Brain microvascular endothelial cell (primary cell): ENCODE measurements at regions of chr12 and their contacts with region 1.

Region 1: DNA sequence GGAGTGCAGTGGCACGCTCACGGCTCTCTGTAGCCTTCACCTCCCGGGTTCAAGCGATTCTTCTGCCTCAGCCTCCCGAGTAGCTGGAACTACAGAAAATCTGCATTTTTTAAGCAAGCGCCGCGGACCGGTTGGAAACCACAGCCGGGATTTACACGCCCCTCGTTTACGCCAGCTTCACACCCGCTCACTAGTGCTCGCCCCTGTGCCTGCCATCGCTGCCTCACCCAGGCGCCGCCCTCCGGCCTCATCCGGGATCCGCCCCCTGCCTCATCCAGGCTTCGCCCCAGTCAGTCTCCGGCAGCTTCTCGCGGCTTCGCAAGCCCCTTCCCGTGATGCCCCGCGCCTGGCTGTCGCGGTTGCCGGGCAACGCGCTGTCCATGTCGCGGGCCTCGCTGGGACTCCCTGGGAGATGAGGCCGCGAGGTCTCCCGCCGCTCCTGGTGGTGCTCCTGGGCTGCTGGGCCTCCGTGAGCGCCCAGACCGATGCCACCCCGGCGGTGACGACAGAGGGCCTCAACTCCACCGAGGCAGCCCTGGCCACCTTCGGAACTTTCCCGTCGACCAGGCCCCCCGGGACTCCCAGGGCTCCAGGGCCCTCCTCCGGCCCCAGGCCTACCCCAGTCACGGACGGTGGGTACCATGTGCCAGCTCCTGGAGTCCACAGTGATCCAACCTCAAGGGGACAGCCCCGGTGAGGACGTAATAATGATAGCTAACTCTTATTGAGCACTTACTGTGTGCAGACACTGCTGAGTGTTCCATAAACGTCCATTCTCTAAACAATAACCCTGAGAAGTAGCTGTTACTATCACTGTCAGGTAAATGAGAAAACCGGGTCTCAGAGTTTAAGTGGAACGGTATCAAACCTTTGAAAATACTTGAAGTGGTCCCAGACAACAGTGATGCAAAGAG is at the start of gene TCTN1:
- DNase-seq: peak; percentile 93
- H3K4me3 ChIP-seq: peak within 1 kb of the TSS; percentile 75
- H3K27ac ChIP-seq: peak within 1 kb of the TSS; percentile 86
- H3K27me3 ChIP-seq: no peaks in the 10 kb centered on the region
- CTCF ChIP-seq: no peak

Region 2: DNA sequence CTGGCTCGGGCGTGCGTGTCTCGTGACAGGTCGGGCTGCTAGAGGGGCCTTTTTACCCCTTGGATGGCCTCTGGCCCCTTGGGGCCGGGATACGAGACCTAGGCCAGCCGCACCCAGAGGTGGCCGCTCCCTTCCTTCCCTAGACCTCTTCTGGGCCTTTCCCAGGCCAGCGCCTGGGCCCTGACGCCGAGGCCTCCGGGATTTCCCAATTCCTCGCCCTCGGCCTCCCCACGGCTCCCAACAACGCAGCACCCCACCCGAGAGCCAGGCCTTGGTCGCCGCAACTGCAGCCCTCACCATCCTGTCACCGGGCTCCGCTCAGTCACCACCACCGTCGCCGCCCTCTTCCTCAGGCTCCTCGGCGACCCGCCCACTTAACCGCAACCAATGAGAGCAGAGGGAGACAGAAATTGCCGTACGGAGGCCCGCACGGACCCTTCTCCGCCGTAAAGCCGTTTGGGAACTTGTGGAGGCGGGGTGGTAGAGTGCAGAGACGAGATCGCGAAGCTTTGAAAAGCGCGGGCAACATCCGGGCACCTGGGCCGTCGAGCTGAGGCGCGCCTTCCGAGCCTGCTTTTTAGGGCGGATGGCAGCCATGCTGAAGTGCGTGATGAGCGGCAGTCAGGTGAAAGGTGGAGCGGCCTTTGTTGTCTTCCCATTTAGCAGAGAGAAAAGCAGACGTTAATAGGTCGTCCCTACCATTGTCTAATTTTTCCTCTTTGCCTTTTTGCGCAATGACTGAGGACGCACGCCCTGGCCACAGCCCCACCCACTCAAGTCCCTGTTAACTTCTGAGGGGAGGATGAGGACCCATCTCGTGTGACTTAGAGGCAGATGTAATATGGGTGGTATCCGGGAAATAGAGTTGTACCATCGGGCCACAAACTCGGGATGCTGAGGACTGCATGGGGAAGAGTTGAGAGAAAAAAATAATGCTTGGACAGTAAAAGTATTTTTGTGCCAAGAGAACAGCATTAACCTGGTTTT is 112.0 kb before region 1 on chr12 and contains the starts of genes RAD9B and VPS29:
- in situ Hi-C with region 1: loop called (anchors 25 kb)
- DNase-seq: peak; percentile 99
- H3K4me3 ChIP-seq: peak within 1 kb of the TSS; percentile 91
- H3K27ac ChIP-seq: peak within 1 kb of the TSS; percentile 47
- H3K27me3 ChIP-seq: no peaks in the 10 kb centered on the region
- CTCF ChIP-seq: no peak